Heart right ventricle (tissue), 16 donors: ENCODE measurements at regions of chr4 and their contacts with region 1.

Region 1: DNA sequence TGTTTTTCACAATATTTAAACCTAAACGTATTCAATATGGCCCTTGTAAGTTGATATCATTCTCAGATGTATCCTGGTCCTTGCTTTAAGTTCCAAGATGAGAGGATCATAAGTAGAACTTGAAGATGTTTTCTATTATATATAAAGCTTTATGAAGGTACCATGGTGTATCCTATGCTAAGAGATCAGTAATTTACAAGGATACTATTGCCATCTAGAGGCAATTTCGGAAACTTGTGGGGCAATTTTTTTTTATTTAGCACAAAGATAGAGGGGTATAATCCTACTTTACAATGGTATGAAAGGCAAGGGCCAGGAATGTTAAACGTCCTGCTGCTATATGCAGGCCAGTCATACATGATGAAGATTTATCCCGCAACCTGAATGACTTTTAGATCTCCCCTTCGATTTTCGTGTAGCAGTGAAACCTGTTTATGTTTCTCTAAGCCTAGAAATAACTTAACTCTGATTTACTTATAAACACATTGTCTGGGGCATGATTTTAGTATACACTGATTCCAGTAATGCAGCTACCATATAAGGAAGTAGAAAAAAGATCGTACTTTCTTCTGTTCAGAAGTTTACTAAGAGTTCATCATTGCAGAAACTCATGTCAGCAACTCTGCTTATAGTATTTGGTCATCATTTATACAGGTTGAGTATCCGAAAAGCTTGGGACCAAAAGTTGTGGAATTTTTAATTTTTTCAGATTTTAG is 2.6 kb downstream of the SLC25A31 start:
- DNase-seq: no peak
- ATAC-seq: no peak
- H3K4me3 ChIP-seq: no peak overlapping the region
- H3K27ac ChIP-seq: no peak overlapping the region
- H3K4me1 ChIP-seq: no peaks in the 10 kb centered on the region
- H3K27me3 ChIP-seq: no peaks in the 10 kb centered on the region
- CTCF ChIP-seq: peak in 8 of 9 donors; percentile 34 to 68 (median 58)

Region 2: DNA sequence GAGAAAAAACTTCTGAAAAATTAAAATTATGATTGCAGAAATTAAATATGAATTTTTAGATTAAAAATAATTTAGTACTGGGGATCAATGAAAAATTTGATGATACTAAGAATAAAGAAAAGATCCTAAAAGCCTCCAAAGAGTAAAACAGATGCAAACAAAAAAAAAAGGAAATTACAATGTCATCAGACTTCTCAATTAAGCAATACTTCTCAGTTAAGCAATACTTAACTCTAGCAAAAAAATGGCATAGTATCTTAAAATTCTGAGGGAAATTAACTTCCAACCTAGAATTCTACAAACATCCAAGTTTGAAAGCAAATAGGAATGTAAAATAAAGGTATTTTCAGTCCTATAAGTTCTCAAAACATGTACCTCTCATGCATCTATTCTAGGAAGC is 241.2 kb before region 1 on chr4:
- intact Hi-C with region 1: no loop called
- DNase-seq: no peak
- ATAC-seq: no peak
- H3K4me3 ChIP-seq: no peak overlapping the region
- H3K27ac ChIP-seq: no peak overlapping the region
- H3K4me1 ChIP-seq: no peaks in the 10 kb centered on the region
- H3K27me3 ChIP-seq: no peaks in the 10 kb centered on the region
- CTCF ChIP-seq: no peak

Region 3: DNA sequence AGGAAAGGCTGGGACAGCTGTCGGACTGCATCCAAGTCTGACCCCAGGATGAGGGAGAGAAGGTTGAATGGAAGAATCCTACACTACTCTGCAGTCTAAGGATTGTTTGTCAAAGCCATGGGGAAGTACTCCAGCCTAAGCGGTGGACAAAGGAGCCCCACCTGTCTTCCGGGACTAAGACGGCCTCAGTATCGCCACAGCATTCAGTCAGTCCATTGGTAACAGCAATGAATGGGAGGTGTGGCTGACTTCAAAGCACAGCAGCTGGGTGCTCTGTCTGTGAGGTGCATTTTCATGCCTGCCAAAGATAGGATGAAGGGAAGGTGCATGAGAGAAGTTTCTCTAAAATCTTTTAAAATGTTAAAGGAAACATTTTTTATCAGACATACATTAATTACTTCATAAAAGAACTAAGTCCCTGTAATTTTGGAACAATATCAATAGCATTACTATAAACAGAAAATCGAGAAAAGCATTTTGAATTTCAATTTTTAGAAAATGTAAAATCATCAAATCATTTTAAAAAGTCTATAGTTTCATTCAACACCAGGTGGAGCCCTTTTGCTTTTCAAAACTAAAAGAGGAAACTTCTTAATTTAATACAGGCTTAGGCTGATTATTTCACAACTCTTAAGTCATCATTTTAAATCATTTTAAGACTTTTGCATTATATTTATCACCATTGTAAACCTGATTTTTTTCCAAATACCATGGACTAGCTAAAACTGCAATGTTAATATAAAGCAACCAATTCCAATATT is 127.6 kb before region 1 on chr4:
- intact Hi-C with region 1: loop called (anchors 1 to 5 kb)
- DNase-seq: no peak
- ATAC-seq: no peak
- H3K4me3 ChIP-seq: no peak overlapping the region
- H3K27ac ChIP-seq: no peak overlapping the region
- H3K4me1 ChIP-seq: no peaks in the 10 kb centered on the region
- H3K27me3 ChIP-seq: peaks cover 0 to 24% (median 7%) of the 10 kb centered on the region in 7 donors
- CTCF ChIP-seq: peak in 8 of 9 donors; percentile 42 to 72 (median 60)

Region 4: GRCh38 chr4:127632420-127633403 is 100.1 kb before region 1 on chr4 and contains the start of gene INTU:
- intact Hi-C with region 1: loop called in 1 of 10 experiments (anchors 5 kb)
- DNase-seq: peak; percentile 88 to 94
- ATAC-seq: peak; percentile 98 to 100 (median 100)
- H3K4me3 ChIP-seq: peak within 1 kb of the TSS; percentile 44 to 85 (median 68)
- H3K27ac ChIP-seq: peak within 1 kb of the TSS in 6 of 10 donors; percentile 34 to 73 (median 52)
- H3K4me1 ChIP-seq: peaks cover 0 to 21% (median 9%) of the 10 kb centered on the region in 9 donors
- H3K27me3 ChIP-seq: peaks cover 0 to 6% (median 0%) of the 10 kb centered on the region in 7 donors
- CTCF ChIP-seq: no peak
- total RNA-seq, gene INTU: 3.0 to 6.9 (median 4.5) TPM

Region 5: GRCh38 chr4:127985995-127986394 is 253.2 kb after region 1 on chr4:
- intact Hi-C with region 1: no loop called
- DNase-seq: no peak
- ATAC-seq: no peak
- H3K4me3 ChIP-seq: no peak overlapping the region
- H3K27ac ChIP-seq: no peak overlapping the region
- H3K4me1 ChIP-seq: peaks cover 0 to 14% (median 0%) of the 10 kb centered on the region in 9 donors
- H3K27me3 ChIP-seq: no peaks in the 10 kb centered on the region
- CTCF ChIP-seq: peak in 2 of 9 donors; percentile 12 to 25